Naive thymus-derived CD4-positive, alpha-beta T cell (primary cell): ENCODE measurements at regions of chr17 and their contacts with region 1.

Region 1: DNA sequence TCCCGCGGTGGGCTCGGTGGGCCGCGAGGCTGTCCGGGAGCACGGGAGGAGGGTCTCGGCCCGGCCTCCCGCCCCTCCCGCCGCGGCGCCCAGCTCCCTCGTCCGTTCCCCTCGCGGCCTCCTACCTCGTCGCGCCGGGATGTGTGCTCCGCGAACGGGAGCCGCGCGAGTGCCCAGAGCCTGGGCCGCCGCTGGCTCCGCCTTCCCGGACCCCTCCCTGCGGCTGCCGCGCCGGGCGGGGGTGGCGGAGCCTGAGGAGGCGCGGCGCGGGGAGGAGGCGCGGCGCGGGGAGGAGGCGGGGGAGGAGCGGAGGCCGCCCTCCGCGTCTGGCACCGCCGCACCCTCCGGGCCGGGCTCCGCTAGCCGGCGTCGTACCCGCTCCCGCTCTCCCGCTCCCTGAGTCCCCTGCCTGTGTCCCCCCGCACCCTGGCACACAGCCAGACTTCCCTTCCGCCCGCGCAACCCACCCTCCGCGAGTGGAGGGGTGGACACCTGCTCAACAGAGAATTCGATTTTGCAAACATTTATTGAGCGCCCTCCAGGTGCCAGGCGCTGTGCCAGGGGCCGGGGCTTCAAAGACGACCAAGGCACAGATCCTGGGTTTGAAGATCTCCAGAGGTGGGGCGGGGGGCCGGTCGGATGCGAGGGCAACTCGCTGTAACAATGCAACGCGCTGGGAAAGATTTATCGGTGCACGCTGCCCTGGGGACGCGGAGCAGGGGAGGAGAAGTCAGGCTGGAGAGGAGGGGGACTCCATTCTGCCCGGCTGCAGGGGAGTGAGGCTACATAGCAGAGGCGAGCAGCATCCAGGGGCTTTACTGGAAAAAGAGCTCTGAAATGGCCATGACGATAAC is at the start of gene MPP3:
- DNase-seq: peak; percentile 14 to 53 (median 45)
- ATAC-seq: peak; percentile 94
- H3K4me3 ChIP-seq: peak within 1 kb of the TSS; percentile 52
- H3K4me3 Mint-ChIP-seq: peak within 1 kb of the TSS; percentile 78 to 91 (median 84)
- H3K27ac ChIP-seq: no peak within 1 kb of the TSS
- H3K27ac Mint-ChIP-seq: peak within 1 kb of the TSS in 2 of 9 donors; percentile 41 to 61
- H3K4me1 ChIP-seq: peaks cover 5 to 8% of the 10 kb centered on the region in 2 donors
- H3K4me1 Mint-ChIP-seq: peaks cover 9 to 30% (median 14%) of the 10 kb centered on the region in 7 donors
- H3K27me3 ChIP-seq: peaks cover 10 to 13% of the 10 kb centered on the region in 2 donors
- H3K27me3 Mint-ChIP-seq: peaks cover 15 to 66% (median 23%) of the 10 kb centered on the region in 5 donors
- total RNA-seq, gene MPP3: 0.32 to 1.4 TPM in 2 of 5 experiments, not detected in the others

Region 2: GRCh38 chr17:43778337-43779144 is 54.7 kb before region 1 on chr17 and contains the start of gene DUSP3:
- CTCF ChIA-PET with region 1: no interaction called
- POLR2A ChIA-PET with region 1: no interaction called
- intact Hi-C with region 1: loop called in 1 of 2 experiments (anchors 5 kb)
- DNase-seq: peak; percentile 70 to 82 (median 78)
- ATAC-seq: peak; percentile 97
- H3K4me3 ChIP-seq: peak within 1 kb of the TSS; percentile 74
- H3K4me3 Mint-ChIP-seq: peak within 1 kb of the TSS; percentile 80 to 89 (median 84)
- H3K27ac ChIP-seq: peak within 1 kb of the TSS; percentile 79
- H3K27ac Mint-ChIP-seq: peak within 1 kb of the TSS in 7 of 9 donors; percentile 71 to 86 (median 78)
- H3K4me1 ChIP-seq: peaks cover 7% of the 10 kb centered on the region in 2 donors
- H3K4me1 Mint-ChIP-seq: peaks cover 0 to 15% (median 10%) of the 10 kb centered on the region in 7 donors
- H3K27me3 ChIP-seq: no peaks in the 10 kb centered on the region
- H3K27me3 Mint-ChIP-seq: peaks cover 16 to 38% (median 24%) of the 10 kb centered on the region in 5 donors
- total RNA-seq, gene DUSP3: 8.5 to 31.0 (median 11.0) TPM

Region 3: GRCh38 chr17:43814714-43815113 is 18.5 kb before region 1 on chr17:
- CTCF ChIA-PET with region 1: no interaction called
- POLR2A ChIA-PET with region 1: no interaction called
- intact Hi-C with region 1: no loop called
- DNase-seq: no peak
- ATAC-seq: no peak
- H3K4me3 ChIP-seq: no peak overlapping the region
- H3K4me3 Mint-ChIP-seq: no peak overlapping the region
- H3K27ac ChIP-seq: no peak overlapping the region
- H3K27ac Mint-ChIP-seq: peak overlapping the region in 1 of 9 donors; percentile 4
- H3K4me1 ChIP-seq: no peaks in the 10 kb centered on the region
- H3K4me1 Mint-ChIP-seq: peaks cover 0 to 3% (median 0%) of the 10 kb centered on the region in 7 donors
- H3K27me3 ChIP-seq: no peaks in the 10 kb centered on the region
- H3K27me3 Mint-ChIP-seq: peaks cover 0 to 12% (median 0%) of the 10 kb centered on the region in 5 donors